Activated T-helper 2 cell treated with anti-CD3 and anti-CD28 coated beads, Interferon-gamma antibody, Interleukin-2, Interleukin-4, amounts not matched to agents 10 μg/mL and 5 μg/mL and 100 μg/mL, durations not matched to agents 14 hours and 24 hours and 36 hours (primary cell): ENCODE measurements at regions of chr9 and their contacts with region 1.

Region 1: DNA sequence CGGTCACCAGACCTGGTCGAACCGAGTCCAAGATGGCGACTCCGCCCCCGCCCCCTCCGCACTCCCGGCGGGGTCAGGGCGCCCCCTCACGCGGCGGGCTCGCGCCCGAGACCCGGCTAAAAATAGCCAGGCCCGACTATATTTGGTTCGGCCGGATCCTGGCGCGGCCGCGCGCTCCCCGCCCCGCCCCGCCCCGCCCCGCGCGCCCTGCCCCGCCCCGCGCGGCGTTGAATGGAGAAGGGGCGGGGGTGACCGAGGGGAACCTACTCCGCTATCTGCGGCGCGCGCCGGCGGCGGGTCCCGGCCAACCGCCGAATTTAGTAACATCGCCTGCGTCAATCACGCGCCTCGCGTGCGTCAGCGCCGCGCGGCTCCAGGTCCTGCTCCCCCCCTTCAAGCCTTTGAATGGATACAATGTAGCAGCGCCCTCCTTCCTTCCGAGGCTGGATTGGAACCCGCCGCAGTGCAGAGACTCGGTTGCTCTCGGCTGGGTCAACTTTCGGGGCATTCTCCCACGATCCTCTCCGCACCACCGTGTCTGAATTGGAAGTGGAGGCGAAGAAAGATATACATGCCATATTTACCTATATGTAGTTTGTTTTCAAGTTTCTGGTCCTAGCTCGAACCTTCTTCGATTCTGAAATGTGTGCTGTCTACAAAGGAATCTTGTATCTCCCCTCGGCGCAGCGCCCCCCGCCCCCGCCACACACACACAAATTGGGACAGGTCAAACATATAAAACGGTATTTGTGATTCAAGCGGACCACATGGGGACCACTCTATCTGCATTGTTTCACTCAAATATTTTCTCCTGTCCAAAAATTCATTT is 1.6 kb upstream of the NR4A3 start:
- DNase-seq: peak; percentile 87
- H3K4me3 Mint-ChIP-seq: peak overlapping the region; percentile 100
- H3K27ac Mint-ChIP-seq: peak overlapping the region; percentile 98
- H3K4me1 Mint-ChIP-seq: peaks cover 44% of the 10 kb centered on the region
- H3K27me3 Mint-ChIP-seq: peaks cover 3% of the 10 kb centered on the region

Region 2: DNA sequence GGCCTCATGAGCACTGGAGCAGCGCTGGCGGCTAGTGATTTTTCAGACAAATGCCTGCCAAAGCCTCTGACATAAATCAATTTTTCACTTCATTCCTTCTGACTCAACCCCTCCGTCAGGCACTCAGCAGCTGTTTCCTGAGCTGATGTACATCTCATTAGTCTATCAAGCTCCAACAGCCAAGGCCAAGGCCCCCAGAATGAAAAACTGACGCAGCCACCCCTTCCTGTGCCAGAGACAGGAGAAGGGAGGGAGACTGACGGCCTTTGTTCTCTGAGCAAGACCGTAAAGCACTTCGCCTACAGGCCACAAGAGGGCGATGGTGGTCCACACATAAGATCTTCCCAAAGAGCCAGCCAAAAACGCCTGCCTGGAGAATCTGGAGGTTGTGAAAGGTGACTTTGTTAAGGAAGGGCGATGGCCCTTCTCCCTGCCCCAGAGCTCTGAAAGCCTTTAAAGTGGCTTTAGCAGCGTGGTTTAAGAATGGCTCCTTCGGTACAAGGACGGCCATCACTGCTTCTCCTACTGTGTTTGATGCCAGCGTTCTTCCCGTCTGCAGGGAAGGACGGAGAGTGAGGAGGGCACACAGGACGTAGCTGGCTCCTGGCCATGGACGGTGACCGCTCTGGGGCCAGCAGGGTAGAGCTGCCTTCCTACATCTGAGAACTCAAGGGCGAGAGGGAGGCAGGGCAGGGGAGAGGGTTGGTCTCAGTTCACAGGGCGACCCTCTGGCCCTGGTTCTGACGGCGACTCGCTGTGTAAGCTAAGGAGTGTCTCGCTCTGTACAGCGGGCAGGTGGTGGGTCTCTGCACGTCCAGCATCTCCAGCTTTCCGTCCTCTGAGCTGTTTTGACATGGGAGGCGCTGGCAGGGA is 635.4 kb before region 1 on chr9:
- intact Hi-C with region 1: loop called (anchors 2 kb)
- DNase-seq: peak; percentile 62
- H3K4me3 Mint-ChIP-seq: no peak overlapping the region
- H3K27ac Mint-ChIP-seq: peak overlapping the region; percentile 79
- H3K4me1 Mint-ChIP-seq: peaks cover 50% of the 10 kb centered on the region
- H3K27me3 Mint-ChIP-seq: peaks cover 10% of the 10 kb centered on the region

Region 3: DNA sequence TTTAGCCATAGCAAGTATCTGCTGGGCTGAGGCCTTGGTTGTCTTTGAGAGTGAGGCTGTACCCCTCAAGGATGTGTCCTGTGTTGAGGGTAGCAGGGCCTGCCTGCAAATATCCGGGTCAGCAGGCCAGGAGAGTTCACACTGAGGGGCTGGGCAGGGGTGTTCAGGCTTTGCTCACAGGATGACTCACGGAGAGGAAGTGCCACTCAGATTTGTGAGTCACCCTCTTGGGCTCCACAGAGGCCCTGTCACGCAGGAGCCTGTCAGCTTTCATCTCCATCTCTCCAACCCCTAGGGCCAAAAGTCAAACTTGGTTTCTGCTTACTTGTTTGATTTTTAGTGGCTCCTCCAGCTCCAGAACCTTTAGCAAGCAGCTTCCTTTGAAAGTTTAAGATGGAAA is 386.5 kb before region 1 on chr9:
- intact Hi-C with region 1: loop called (anchors 10 kb)
- DNase-seq: peak; percentile 54
- H3K4me3 Mint-ChIP-seq: no peak overlapping the region
- H3K27ac Mint-ChIP-seq: peak overlapping the region; percentile 61
- H3K4me1 Mint-ChIP-seq: peaks cover 36% of the 10 kb centered on the region
- H3K27me3 Mint-ChIP-seq: no peaks in the 10 kb centered on the region

Region 4: GRCh38 chr9:99732715-99733114 is 87.4 kb before region 1 on chr9:
- intact Hi-C with region 1: no loop called
- DNase-seq: no peak
- H3K4me3 Mint-ChIP-seq: no peak overlapping the region
- H3K27ac Mint-ChIP-seq: no peak overlapping the region
- H3K4me1 Mint-ChIP-seq: peaks cover 3% of the 10 kb centered on the region
- H3K27me3 Mint-ChIP-seq: peaks cover 28% of the 10 kb centered on the region

Region 5: GRCh38 chr9:99851500-99851822 is 31.4 kb after region 1 on chr9:
- intact Hi-C with region 1: loop called (anchors 5 kb)
- DNase-seq: peak; percentile 65
- H3K4me3 Mint-ChIP-seq: no peak overlapping the region
- H3K27ac Mint-ChIP-seq: peak overlapping the region; percentile 81
- H3K4me1 Mint-ChIP-seq: peaks cover 68% of the 10 kb centered on the region
- H3K27me3 Mint-ChIP-seq: no peaks in the 10 kb centered on the region

Region 6: DNA sequence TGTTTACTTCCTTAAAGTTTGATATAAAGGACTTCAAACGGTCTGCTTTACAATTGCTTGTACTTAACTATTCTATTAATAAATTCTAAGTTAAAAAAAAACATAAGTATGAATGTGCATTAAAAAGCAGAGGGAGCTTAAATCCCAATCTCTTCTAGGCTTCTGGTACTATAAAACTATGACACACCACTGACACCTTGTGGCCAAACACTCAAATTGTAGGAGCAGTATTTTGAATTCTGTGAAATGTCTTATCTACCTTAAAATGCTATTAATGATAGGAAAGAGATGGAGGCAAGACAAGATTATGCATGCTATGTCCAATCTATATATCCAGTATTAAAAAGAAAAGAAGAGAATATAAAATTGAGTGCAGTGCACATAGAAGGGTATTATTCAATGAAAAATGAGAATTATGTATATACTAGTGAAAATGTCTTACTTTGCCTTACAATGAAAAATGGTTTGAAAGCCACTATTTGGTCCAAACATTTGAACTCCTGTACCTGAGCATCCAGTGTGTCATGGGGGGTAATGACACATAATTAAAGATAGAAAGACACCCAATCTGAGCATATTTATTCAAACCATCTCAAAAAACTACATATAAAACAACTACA is 191.1 kb after region 1 on chr9:
- intact Hi-C with region 1: loop called (anchors 5 kb)
- DNase-seq: no peak
- H3K4me3 Mint-ChIP-seq: no peak overlapping the region
- H3K27ac Mint-ChIP-seq: no peak overlapping the region
- H3K4me1 Mint-ChIP-seq: no peaks in the 10 kb centered on the region
- H3K27me3 Mint-ChIP-seq: no peaks in the 10 kb centered on the region

Region 7: GRCh38 chr9:100322954-100323536 is 503.0 kb after region 1 on chr9:
- intact Hi-C with region 1: loop called (anchors 5 kb)
- DNase-seq: no peak
- H3K4me3 Mint-ChIP-seq: no peak overlapping the region
- H3K27ac Mint-ChIP-seq: no peak overlapping the region
- H3K4me1 Mint-ChIP-seq: peaks cover 3% of the 10 kb centered on the region
- H3K27me3 Mint-ChIP-seq: no peaks in the 10 kb centered on the region